ENCODE measurements at regions of chr1 and their contacts with region 1.

Region 1: DNA sequence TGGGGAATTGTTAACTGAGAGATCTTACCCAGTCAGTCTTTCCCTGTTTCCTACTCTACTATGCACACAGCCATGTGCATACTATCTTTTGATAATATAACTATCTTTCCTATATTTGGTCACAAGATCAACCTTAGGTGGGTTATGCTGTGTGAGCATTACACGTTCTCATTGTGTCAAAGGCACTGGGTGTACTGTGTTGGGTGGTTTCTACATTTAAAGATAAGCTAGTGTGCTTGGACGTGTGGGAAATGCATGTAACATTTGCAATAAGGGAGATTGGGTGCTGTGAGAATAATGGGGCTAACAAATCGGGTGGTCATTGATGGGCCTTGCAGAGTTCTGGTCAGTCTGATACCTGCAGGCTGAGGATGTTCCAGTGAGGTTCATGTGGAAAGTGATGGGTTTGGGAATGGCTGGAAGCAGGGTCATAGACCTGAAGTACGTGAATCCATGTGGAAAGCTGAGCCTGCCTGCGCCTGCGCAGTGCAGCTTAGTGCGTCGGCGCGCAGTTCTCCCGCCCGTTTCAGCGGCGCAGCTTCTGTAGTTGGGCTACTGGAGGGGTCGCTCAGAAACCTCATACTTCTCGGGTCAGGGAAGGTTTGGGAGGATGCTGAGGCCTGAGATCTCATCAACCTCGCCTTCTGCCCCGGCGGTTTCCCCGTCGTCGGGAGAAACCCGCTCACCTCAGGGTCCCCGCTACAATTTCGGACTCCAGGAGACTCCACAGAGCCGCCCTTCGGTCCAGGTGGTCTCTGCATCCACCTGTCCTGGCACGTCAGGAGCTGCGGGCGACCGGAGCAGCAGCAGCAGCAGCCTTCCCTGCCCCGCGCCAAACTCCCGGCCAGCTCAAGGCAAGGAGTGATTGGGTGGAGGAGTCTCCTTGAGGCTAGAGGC is at the start of gene MSH4:
- DNase-seq: peak in 1 of 5 donors; percentile 32
- ATAC-seq: peak in 3 of 4 donors; percentile 21 to 49 (median 27)
- H3K4me3 ChIP-seq: no peak within 1 kb of the TSS
- H3K27ac ChIP-seq: no peak within 1 kb of the TSS
- H3K4me1 ChIP-seq: peaks cover 0 to 7% (median 0%) of the 10 kb centered on the region in 12 donors
- H3K27me3 ChIP-seq: no peaks in the 10 kb centered on the region
- CTCF ChIP-seq: no peak
- POLR2A ChIP-seq: no peak
- total RNA-seq, gene MSH4: 0.19 to 0.62 (median 0.26) TPM in 7 of 9 donors, not detected in the others

Region 2: DNA sequence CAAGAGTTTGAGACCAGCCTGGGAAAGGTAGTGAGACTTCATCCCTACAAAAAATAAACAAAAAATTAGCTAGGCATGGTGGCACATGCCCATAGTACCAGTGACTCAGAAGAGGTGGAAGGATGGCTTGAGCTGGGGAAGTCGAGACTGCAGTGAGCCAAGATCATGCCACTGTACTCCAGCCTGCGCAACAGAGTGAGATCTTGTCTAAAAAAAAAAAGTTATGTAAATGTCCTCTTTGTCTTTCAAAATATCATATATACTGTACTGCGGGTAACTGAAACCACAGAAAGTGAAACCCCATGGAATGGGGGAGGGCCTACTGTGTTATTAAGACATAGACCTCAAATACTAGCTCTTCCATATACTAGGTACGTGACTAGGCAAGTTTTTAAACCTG is 51.3 kb before region 1 on chr1:
- intact Hi-C with region 1: loop called in 1 of 10 experiments (anchors 10 kb)
- DNase-seq: no peak
- ATAC-seq: no peak
- H3K4me3 ChIP-seq: no peak overlapping the region
- H3K27ac ChIP-seq: no peak overlapping the region
- H3K4me1 ChIP-seq: no peaks in the 10 kb centered on the region
- H3K27me3 ChIP-seq: no peaks in the 10 kb centered on the region
- CTCF ChIP-seq: no peak
- POLR2A ChIP-seq: no peak

Measured in heart left ventricle (tissue), 16 donors.